Activated CD4-positive, alpha-beta T cell treated with anti-CD3 and anti-CD28 coated beads, Interleukin-2, amount 10 ng/mL, durations not matched to agents 7 days and 5 days (primary cell): ENCODE measurements at regions of chr14 and their contacts with region 1.

Region 1: DNA sequence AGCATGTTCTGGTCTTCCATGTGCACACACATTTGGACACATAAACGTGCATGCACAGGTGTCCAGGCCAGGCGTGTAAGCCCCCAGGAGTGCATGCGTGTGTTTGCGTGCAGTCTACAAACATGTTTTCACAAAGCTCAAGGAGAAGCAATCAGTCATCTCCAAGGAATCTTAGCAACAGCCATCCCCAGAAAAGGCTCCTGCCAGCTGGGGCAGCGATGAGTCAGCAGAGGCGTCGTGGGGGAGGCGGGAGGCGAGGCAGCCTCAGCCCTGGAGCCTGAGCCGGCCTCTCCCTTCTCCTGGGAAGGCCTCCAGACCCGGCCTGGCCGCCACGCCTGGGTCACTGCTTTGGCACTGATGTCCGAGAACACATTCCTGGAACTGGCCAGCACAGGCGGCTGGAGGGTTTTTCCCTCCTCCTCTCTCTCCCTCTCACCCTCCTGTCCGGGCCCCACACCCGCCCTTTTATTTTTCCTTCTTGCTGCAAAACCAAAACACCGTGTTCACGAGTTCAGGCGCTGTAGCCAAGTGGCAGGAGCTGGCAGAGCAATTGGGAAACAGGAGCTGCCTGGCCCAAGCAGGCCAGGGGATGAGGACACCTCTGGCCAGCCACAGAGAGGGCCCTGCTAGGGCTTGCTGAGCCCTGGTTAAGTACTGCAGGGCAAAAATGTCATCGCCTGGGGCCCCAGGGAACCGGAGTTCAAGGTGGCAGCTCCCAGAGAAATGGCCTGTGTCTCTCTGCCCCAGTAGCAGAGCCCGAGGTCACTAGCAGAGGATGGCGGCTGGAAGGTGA is 92.7 kb downstream of the LRRC74A start:
- DNase-seq: no peak
- H3K4me3 Mint-ChIP-seq: no peak overlapping the region
- H3K27ac Mint-ChIP-seq: peak overlapping the region; percentile 50
- H3K4me1 Mint-ChIP-seq: peaks cover 75% of the 10 kb centered on the region
- H3K27me3 Mint-ChIP-seq: no peaks in the 10 kb centered on the region

Region 2: DNA sequence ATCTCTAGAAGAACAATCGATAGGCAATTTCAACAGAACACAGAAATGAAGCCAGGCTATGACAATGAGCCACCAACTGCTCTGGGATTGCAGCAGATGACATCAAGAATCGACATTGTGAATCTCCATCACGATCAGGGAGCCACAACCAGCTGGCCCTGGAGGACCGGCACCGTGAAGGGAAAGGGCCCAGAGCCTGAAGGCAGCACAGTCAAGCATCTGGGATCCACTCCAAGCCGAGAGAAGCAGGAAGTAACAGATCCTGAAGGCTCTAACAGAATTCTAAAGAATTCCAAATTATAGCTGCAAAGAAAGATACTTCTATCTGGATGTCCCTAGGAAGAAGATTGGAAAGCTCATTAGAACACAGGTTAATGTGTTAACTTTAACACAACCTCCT is 31.8 kb before region 1 on chr14:
- CTCF ChIA-PET with region 1: no interaction called
- POLR2A ChIA-PET with region 1: no interaction called
- DNase-seq: no peak
- H3K4me3 Mint-ChIP-seq: no peak overlapping the region
- H3K27ac Mint-ChIP-seq: no peak overlapping the region
- H3K4me1 Mint-ChIP-seq: peaks cover 12% of the 10 kb centered on the region
- H3K27me3 Mint-ChIP-seq: peaks cover 15% of the 10 kb centered on the region

Region 3: DNA sequence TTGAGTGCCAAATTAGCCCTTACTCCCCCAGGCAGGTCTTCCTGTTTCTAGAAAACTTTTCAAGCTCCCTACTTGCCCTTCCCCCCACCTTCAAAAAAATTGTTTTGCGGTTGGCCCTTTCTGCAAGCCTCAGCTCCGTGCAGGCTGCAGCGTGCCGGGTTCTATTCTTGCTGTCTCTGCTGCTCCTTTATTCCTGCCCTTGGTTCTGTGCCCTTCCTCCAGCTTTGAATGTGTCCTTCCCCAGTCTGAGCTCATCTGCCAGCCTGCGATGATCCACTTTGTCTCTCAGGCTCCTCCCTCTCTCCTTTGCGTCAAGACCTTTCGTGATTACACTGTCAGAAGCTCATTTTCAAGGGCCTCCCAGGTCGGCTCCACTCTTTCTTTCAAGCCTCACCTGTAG is 11.0 kb after region 1 on chr14:
- CTCF ChIA-PET with region 1: interaction called, 33 read pairs
- POLR2A ChIA-PET with region 1: no interaction called
- DNase-seq: peak; percentile 88
- H3K4me3 Mint-ChIP-seq: peak overlapping the region; percentile 52
- H3K27ac Mint-ChIP-seq: peak overlapping the region; percentile 91
- H3K4me1 Mint-ChIP-seq: peaks cover 85% of the 10 kb centered on the region
- H3K27me3 Mint-ChIP-seq: no peaks in the 10 kb centered on the region

Region 4: DNA sequence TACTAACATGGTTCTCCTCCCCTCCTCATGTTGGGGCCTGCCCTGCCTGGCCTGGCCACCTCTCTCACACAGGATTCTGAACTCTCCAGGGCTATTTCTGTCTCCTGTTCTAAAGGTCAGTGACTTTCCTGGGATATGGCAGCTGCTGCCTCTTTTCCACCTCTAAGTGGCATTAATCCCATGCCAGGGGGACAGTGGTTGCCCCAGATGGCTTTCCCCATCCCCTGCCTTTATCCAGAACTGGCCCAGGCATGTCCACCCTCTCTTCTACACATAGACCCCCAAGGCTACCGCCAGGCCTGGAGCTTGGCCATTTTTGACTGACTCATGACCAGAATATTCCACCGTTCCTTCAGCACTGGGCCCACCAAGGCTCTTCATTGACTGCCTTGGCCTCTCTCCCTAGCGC is 19.1 kb after region 1 on chr14:
- CTCF ChIA-PET with region 1: interaction called, 16 read pairs
- POLR2A ChIA-PET with region 1: no interaction called
- DNase-seq: no peak
- H3K4me3 Mint-ChIP-seq: no peak overlapping the region
- H3K27ac Mint-ChIP-seq: no peak overlapping the region
- H3K4me1 Mint-ChIP-seq: peaks cover 25% of the 10 kb centered on the region
- H3K27me3 Mint-ChIP-seq: no peaks in the 10 kb centered on the region

Region 5: DNA sequence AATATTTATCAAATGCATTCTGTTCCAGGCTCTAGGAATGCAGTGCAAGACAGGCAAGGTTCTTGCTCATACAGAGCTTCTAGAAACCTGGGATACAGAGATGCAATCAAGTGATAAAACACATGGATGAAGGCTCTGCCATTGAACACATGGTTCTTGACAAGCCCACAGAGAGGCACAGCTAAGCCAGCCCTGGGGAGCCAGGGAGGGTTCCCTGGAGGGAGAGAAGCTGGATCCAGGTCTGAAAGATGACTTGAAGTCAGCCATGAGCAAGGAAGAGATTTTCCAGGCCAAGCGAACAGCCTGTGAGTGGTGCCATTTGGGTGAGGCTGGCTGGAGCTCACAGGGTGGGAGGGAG is 43.3 kb after region 1 on chr14:
- CTCF ChIA-PET with region 1: interaction called, 14 read pairs
- POLR2A ChIA-PET with region 1: no interaction called
- DNase-seq: no peak
- H3K4me3 Mint-ChIP-seq: peak overlapping the region; percentile 66
- H3K27ac Mint-ChIP-seq: peak overlapping the region; percentile 96
- H3K4me1 Mint-ChIP-seq: peaks cover 90% of the 10 kb centered on the region
- H3K27me3 Mint-ChIP-seq: no peaks in the 10 kb centered on the region

Region 6: DNA sequence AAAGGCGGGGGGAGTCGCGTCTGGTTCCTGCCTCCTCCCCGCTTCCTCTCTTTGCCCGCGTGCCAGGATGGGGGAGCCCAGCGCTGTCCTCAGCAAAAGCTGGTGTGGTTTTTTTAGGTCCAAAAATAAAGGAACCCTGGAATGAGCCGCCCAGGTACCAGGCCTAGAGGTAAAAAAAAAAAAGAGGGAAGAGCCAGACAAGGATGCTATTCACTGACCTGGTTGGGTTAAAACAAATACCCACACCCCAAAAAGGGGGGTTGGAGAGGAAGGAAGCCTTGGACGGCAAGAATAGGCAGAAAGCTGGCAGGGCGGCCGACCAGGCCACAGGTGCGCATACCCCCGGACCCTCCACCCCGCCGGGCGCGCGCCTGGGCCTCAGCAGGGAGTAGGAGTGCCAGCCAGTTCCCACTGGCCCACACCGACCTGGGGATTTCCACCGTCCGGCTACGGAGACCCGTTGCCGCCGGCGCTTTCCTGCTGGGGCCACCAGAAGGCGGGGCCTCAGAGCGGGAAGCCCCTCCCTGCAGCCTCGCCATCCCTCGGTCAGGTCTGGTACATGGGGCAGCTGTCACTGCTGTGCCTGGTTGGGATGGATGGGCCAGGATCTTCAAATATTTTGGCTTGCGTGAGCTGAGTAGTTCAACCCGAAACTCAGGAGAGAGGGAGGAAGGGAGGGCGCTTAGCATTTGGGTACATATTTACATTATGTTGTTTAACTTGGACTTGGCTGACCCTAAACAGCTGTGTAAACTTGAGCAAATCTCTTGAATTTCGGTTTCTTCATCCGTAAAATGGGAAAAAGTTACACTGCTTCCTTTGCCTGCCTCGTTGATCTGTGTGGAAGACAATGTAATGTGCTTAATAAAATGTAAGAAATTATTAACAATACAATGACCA is 114.9 kb after region 1 on chr14:
- CTCF ChIA-PET with region 1: interaction called, 17 read pairs
- POLR2A ChIA-PET with region 1: no interaction called
- DNase-seq: peak; percentile 74
- H3K4me3 Mint-ChIP-seq: peak overlapping the region; percentile 92
- H3K27ac Mint-ChIP-seq: peak overlapping the region; percentile 96
- H3K4me1 Mint-ChIP-seq: peaks cover 89% of the 10 kb centered on the region
- H3K27me3 Mint-ChIP-seq: no peaks in the 10 kb centered on the region

Region 7: DNA sequence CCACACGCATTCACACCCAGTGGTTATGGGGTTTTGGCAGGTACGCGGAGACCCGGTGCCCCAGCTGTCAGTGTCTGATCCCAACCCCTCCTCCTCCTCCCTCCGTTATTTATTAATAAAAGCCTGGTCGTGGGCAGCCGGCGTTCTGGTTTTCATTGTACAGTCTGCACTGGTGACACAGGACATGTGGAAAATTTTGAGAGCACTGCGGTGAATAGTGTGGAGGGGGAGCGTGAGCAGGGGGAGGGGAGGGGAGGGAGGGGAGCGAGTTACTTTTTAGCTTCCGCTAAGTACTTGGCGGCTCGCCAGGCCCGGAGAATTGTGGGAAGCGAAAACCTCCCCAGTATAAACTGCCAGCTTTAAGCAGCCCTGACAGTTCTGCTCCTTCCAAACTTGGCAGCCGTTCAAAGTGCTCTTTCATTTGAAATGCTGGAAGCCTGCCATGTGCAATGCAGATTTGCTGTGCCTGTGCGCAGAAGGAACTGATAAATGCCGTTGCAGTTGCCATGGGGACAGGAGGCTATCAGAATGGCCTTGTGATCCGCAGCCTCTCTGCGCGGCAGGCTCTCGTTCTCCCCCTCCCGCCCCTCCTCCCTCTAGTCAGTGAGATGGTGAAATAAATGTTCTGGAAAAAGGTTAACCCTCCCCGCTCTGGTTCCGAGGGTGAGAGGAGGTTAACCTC is 121.3 kb after region 1 on chr14:
- CTCF ChIA-PET with region 1: interaction called, 17 read pairs
- POLR2A ChIA-PET with region 1: no interaction called
- DNase-seq: peak; percentile 96
- H3K4me3 Mint-ChIP-seq: peak overlapping the region; percentile 71
- H3K27ac Mint-ChIP-seq: peak overlapping the region; percentile 97
- H3K4me1 Mint-ChIP-seq: peaks cover 92% of the 10 kb centered on the region
- H3K27me3 Mint-ChIP-seq: no peaks in the 10 kb centered on the region